Activated CD4-positive, alpha-beta T cell treated with anti-CD3 and anti-CD28 coated beads, Interleukin-2, amount 10 ng/mL, durations not matched to agents 7 days and 5 days (primary cell): ENCODE measurements at regions of chr15 and their contacts with region 1.

Region 1: DNA sequence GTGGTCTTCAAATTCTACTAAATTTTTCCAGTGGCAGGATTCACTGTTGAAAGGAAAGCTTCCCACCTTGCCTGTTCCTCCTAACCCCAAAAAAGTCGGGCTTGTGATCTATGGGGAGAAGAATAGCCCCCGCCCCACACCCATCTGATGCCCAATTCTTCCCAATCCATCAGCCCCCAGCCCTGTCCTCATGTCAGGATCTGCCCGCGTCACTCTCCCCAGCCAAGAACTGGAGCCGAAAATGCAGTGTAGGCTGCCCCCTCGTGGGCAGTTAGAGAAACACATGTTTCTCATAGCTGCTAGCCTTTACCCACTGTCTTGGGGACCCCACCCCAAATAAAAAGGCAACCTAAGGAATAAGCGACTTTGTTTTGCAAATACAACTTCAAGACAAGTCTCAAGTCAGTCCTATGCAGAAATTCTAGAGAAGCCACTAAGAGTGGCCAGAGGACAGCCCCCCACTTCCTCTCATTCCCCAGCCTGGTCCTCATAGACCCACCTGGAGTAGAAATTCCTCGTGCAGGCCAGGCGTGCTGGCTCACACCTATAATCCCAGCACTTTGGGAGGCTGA is 13.0 kb upstream of the CSK start:
- DNase-seq: peak; percentile 77
- H3K4me3 Mint-ChIP-seq: no peak overlapping the region
- H3K27ac Mint-ChIP-seq: peak overlapping the region; percentile 58
- H3K4me1 Mint-ChIP-seq: peaks cover 25% of the 10 kb centered on the region
- H3K27me3 Mint-ChIP-seq: peaks cover 6% of the 10 kb centered on the region

Region 2: GRCh38 chr15:74291101-74292071 is 477.5 kb before region 1 on chr15:
- CTCF ChIA-PET with region 1: no interaction called
- POLR2A ChIA-PET with region 1: no interaction called
- DNase-seq: peak; percentile 87
- H3K4me3 Mint-ChIP-seq: no peak overlapping the region
- H3K27ac Mint-ChIP-seq: no peak overlapping the region
- H3K4me1 Mint-ChIP-seq: peaks cover 4% of the 10 kb centered on the region
- H3K27me3 Mint-ChIP-seq: no peaks in the 10 kb centered on the region

Region 3: DNA sequence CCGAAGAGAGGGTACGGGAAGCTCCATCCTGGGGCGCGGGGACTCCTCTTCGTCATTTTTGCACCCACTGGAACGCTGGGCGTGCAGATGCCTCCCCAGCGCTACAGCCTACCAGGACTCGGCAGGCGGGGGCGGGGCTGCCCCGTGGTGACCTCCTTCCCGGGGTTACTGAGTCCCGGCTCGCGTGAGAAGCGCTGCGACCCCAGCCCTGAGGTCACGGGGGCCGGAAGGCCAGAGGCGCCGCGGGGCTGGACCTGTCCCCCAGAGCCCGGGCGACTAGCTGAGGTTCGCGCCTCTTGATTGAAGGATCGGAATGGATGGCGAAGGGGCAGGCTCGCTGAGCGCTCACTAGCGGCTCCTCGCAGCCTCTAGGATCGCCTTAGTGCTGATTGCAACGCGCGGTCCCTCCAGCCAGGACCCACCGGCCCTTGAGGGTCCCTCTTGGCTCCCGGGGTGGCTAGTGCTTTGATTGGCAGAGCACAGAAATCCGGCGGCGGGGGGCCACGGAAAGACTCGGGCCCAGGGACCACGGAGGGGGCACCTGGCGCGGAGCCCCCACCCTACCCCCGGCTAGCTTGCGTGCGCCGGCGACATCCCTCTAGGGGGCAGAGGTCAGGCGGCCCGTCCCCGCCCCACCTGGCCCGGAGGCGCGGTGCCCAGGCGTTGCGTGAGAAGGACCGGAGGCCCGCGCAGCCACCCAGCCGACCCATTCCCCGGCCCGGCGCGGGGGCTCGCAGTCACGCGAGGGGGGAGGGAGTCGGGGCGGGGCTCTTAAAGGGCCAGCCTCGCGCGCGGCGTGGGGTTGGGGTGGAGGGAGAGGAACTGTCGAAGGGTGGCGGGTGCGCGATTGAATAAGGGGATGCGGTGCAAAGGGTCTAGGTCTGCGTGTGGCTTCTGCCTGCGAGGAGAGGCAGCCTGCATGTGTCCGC is 42.7 kb before region 1 on chr15:
- CTCF ChIA-PET with region 1: interaction called, 12 read pairs
- POLR2A ChIA-PET with region 1: no interaction called
- DNase-seq: peak; percentile 65
- H3K4me3 Mint-ChIP-seq: peak overlapping the region; percentile 66
- H3K27ac Mint-ChIP-seq: peak overlapping the region; percentile 89
- H3K4me1 Mint-ChIP-seq: peaks cover 25% of the 10 kb centered on the region
- H3K27me3 Mint-ChIP-seq: peaks cover 16% of the 10 kb centered on the region

Region 4: DNA sequence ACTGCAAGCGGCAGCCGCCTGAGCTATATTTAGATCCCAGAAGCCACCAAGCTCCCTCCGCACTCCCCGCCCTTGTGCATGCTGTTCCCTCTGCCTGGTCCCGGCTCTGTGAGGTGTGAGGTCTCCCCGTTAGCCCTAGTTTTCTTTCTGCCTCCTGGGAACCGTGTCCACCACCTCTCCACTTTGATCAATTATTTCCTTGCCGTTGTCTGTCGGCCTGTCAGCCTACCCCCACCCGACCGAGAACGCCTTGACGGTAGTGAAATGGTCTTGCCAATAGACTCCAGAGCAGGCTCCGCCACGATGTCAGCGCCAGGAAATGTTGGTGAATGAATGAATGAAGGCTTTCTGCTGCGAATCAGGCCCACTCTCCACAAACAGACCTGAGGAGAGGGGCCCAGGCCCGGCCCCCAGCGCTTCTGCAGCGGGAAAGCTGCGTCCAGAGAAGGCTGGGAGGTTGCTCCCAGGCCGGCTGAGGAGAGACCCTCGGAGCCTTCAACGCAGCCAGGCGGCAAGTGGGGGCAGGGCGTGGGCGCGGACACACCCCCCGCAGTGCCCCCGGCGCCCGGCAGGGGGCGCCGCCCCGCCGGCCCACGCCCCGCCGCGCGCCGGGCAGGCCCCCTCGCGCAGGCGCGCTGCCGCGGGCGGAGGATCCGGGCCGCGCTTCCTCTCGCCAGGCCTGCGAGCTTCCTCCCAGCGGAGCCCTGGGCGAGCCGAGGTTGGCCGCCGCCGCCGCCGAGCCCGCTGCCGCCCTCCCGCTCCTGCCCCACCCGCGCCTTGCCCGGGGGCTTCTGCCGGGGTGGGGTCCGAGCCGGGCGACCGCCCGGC is 12.8 kb after region 1 on chr15 and contains the start of gene CSK:
- CTCF ChIA-PET with region 1: interaction called, 930 read pairs
- POLR2A ChIA-PET with region 1: interaction called, 4 read pairs
- DNase-seq: peak; percentile 74
- H3K4me3 Mint-ChIP-seq: peak within 1 kb of the TSS; percentile 88
- H3K27ac Mint-ChIP-seq: peak within 1 kb of the TSS; percentile 98
- H3K4me1 Mint-ChIP-seq: peaks cover 63% of the 10 kb centered on the region
- H3K27me3 Mint-ChIP-seq: no peaks in the 10 kb centered on the region
- total RNA-seq, gene CSK: 315 to 348 TPM

Region 5: GRCh38 chr15:74950078-74951000 is 181.5 kb after region 1 on chr15:
- CTCF ChIA-PET with region 1: interaction called, 10 read pairs
- POLR2A ChIA-PET with region 1: no interaction called
- DNase-seq: peak; percentile 85
- H3K4me3 Mint-ChIP-seq: no peak overlapping the region
- H3K27ac Mint-ChIP-seq: no peak overlapping the region
- H3K4me1 Mint-ChIP-seq: peaks cover 9% of the 10 kb centered on the region
- H3K27me3 Mint-ChIP-seq: no peaks in the 10 kb centered on the region

Region 6: DNA sequence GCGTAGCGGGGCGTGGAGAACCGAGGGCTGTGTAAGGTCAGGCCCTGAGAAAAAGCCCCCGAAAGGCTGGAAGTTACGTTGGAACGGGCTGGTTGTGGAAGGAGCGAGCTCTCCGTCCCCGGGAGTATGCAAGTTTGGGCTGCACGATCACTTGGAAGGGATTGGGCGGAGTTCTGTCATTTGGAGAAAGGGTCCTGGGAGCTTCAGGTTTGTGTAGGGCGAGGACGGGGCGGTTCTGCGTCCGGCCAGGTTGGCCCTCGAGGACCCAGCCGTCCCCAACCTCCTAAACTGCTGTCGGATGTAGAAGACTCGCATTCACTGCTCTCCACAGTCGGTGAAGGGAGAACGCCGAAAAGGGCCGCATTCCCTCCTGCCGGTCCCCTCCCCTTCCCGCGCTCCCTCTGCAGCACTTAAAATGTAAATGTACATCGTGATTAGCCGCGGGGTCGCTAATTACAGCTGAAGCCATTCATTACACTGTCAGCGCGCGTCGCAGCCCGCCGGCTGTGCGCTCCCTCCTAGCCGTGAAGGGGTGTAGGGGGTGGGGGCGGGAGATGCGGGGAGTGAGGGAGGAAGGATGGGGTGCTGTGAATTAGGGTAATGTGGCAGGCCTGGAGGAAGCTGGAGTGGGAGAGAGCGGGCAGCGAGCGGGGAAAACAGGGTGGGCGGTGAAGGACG is 190.2 kb after region 1 on chr15:
- CTCF ChIA-PET with region 1: interaction called, 14 read pairs
- POLR2A ChIA-PET with region 1: no interaction called
- DNase-seq: no peak
- H3K4me3 Mint-ChIP-seq: peak overlapping the region; percentile 47
- H3K27ac Mint-ChIP-seq: peak overlapping the region; percentile 39
- H3K4me1 Mint-ChIP-seq: peaks cover 48% of the 10 kb centered on the region
- H3K27me3 Mint-ChIP-seq: peaks cover 38% of the 10 kb centered on the region